ENCODE measurements at regions of chr15 and their contacts with region 1.

Region 1: DNA sequence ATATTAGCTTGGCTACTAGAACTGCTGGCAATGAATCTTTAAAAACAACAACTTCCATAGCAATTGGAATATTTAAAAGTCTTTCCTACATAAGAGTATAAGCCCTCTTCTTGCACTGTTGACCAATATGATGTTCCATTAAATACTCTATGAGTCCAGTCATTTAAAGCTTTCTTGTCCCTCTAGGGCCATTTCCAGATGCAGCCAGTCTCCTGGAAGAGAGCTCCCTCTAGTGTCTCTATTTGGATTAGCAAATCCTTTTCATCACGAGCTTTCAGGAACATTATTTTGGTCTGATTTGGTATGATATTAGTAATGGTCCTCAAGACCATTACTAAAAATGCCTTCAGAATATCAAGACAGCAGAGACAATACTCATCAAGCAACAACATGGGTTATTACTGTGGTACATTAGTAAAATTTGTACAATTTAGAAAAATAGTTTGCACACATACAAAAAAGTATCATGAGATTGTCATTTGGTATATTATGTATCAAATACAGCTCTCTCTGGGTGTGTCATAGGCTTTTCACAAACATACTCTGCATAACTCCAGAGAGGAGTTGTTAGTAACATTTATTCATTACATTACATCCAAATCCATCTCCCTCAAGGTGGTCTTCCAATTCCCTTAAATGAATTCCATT is 101.3 kb downstream of the DPH6 start:
- DNase-seq: no peak
- H3K4me3 ChIP-seq: no peak overlapping the region
- CTCF ChIP-seq: peak; percentile 70

Region 2: GRCh38 chr15:35281515-35281914 is 163.2 kb before region 1 on chr15:
- CTCF ChIA-PET with region 1: interaction called, 59 read pairs
- POLR2A ChIA-PET with region 1: no interaction called
- DNase-seq: no peak
- H3K4me3 ChIP-seq: no peak overlapping the region
- CTCF ChIP-seq: no peak

Region 3: DNA sequence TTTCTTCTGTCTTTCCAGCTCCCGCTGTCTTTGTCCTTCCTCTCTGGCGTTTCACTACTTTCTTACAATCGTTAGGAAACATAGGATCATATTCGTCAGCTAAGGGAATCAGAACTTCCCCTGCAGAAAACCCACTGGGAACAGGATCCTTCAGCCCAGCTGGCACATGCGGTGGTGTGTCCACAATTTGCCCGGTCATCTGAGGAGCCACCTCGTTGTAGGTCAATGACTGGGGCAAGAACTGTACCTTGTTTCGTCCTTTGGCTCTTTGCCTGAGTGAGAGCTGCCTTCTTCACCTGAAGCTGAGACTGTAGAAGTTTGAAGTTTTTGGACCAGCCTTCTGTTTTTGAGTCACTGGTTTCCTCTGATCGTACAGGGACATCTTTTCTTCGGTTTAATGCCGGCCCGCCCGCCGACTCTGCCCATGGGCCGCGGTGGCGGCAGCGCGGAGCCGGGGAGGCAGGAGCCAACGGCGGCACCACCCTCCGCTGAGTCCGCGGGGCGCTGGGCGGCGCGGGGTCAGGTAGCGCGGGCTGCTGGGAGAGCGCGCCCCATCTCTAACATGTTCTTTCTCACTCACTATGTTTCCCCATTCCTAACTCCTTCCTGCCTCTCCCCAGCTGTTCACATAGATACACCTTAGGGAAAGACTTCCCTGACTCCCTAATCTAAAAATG is 145.5 kb before region 1 on chr15:
- CTCF ChIA-PET with region 1: interaction called, 313 read pairs
- POLR2A ChIA-PET with region 1: no interaction called
- DNase-seq: no peak
- H3K4me3 ChIP-seq: no peak overlapping the region
- CTCF ChIP-seq: no peak

Region 4: DNA sequence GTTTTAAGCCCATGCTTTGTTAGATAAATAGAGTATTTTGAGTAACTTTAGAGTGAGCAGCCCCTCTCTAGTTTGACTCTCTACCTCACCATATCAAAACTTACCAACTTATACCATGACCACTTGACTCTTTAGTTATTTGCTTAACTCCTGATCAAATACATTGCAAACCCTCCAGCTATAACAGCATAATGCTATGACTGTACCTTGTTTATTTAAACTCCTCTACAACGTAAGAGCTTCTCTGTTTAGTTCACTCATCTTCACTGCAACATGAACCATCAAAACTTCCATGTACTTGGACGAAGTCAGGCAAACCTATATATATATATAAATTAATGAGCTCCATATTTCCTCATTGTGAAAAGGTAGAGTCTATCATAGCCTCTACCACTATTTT is 116.9 kb before region 1 on chr15:
- CTCF ChIA-PET with region 1: interaction called, 10 read pairs
- POLR2A ChIA-PET with region 1: no interaction called
- DNase-seq: no peak
- H3K4me3 ChIP-seq: no peak overlapping the region
- CTCF ChIP-seq: no peak

Region 5: GRCh38 chr15:35458176-35458856 is 13.6 kb after region 1 on chr15:
- CTCF ChIA-PET with region 1: interaction called, 74 read pairs
- POLR2A ChIA-PET with region 1: no interaction called
- DNase-seq: no peak
- H3K4me3 ChIP-seq: no peak overlapping the region
- CTCF ChIP-seq: no peak

Measured in AG04449 (cell line).